Left lung (tissue), 14 donors: ENCODE measurements at regions of chr16 and their contacts with region 1.

Region 1: GRCh38 chr16:10256784-10257641 is 74.8 kb upstream of the GRIN2A start:
- DNase-seq: peak in 2 of 4 donors; percentile 19 to 51
- ATAC-seq: peak; percentile 96
- H3K4me3 ChIP-seq: no peak overlapping the region
- H3K27ac ChIP-seq: no peak overlapping the region
- H3K4me1 ChIP-seq: peaks cover 0 to 6% of the 10 kb centered on the region in 2 donors
- H3K27me3 ChIP-seq: no peaks in the 10 kb centered on the region
- CTCF ChIP-seq: peak; percentile 66 to 82

Region 2: GRCh38 chr16:10362077-10362863 is 105.3 kb after region 1 on chr16:
- intact Hi-C with region 1: no loop called
- DNase-seq: no peak
- ATAC-seq: no peak
- H3K4me3 ChIP-seq: no peak overlapping the region
- H3K27ac ChIP-seq: no peak overlapping the region
- H3K4me1 ChIP-seq: no peaks in the 10 kb centered on the region
- H3K27me3 ChIP-seq: no peaks in the 10 kb centered on the region
- CTCF ChIP-seq: no peak

Region 3: GRCh38 chr16:10509534-10510025 is 252.6 kb after region 1 on chr16:
- intact Hi-C with region 1: loop called in 1 of 2 experiments (anchors 5 kb)
- DNase-seq: peak in 3 of 4 donors; percentile 49 to 84 (median 61)
- ATAC-seq: peak; percentile 94
- H3K4me3 ChIP-seq: no peak overlapping the region
- H3K27ac ChIP-seq: no peak overlapping the region
- H3K4me1 ChIP-seq: peaks cover 0 to 3% of the 10 kb centered on the region in 2 donors
- H3K27me3 ChIP-seq: no peaks in the 10 kb centered on the region
- CTCF ChIP-seq: peak; percentile 73 to 78